Sciatic nerve (tissue), 2 donors: ENCODE measurements at regions of chr17 and their contacts with region 1.

Region 1: GRCh38 chr17:55601874-55602364 is 90.7 kb upstream of the SMIM36 start:
- DNase-seq: no peak
- ATAC-seq: no peak

Region 2: GRCh38 chr17:55527540-55528118 is 74.3 kb before region 1 on chr17:
- intact Hi-C with region 1: loop called (anchors 10 kb)
- DNase-seq: peak; percentile 62
- ATAC-seq: peak; percentile 90